ENCODE measurements at regions of chr16 and their contacts with region 1.

Region 1: DNA sequence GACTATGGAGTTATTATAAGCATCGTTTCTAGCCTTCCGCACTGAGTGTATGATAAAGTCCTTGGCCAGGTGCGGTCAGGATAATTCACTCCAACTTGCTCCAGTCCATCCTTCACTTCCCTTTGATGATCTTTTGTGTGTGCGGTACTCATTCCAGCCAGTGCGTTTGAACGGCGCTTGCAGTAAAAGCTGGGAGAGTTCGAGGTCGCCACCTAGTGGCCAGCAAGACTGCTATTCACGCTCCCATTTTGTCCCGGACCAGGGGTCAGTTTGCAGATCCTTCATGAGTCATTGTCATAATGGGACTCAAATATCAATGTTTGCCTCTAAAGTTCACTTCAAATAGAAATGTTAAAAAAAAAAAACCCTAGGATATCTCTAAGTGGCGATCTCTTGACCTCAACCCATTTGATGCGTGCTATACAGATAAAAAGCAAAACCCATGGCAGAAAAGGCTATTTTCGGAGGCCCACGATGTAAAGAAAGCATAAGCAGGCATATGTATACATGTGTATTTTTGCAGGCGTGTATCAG is 417.1 kb downstream of the TMEM114 start:
- DNase-seq: peak; percentile 57
- H3K4me3 Mint-ChIP-seq: no peak overlapping the region
- H3K27ac Mint-ChIP-seq: no peak overlapping the region
- H3K4me1 Mint-ChIP-seq: no peaks in the 10 kb centered on the region
- H3K27me3 Mint-ChIP-seq: no peaks in the 10 kb centered on the region

Region 2: DNA sequence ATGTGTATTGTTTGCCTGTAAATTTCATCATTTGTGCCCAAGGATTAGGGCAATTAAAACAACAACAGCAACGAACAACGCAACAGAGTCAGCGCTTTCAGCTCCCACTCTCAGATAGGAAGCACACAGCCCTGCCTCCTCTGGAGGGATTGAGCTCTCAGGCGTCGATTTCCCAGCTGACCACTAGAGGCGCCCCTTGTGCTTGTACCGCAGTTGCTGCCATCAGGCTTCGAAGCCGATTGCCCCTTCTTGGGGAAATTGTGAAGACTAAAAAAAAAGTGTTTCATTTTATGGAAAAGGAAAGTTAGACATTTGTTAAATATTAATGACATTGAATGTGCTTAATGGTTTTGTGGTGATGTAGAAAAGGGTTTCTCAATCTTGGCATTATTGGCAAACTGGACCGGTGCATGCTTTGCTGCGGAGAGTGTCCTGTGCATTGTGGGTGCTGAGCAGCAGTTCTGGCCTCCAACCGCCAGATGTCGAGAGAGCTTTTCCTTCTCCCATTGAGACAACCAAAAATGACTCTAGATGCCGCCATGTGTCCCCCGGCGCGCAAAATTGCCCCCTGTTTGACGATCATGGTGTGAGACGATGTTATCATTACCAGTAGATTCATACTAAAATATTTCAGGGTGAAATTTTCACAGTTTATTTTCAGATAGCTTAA is 1490.9 kb before region 1 on chr16:
- CTCF ChIA-PET with region 1: no interaction called
- intact Hi-C with region 1: loop called (anchors 5 kb)
- DNase-seq: peak; percentile 40
- H3K4me3 Mint-ChIP-seq: no peak overlapping the region
- H3K27ac Mint-ChIP-seq: no peak overlapping the region
- H3K4me1 Mint-ChIP-seq: no peaks in the 10 kb centered on the region
- H3K27me3 Mint-ChIP-seq: peaks cover 3% of the 10 kb centered on the region

Region 3: DNA sequence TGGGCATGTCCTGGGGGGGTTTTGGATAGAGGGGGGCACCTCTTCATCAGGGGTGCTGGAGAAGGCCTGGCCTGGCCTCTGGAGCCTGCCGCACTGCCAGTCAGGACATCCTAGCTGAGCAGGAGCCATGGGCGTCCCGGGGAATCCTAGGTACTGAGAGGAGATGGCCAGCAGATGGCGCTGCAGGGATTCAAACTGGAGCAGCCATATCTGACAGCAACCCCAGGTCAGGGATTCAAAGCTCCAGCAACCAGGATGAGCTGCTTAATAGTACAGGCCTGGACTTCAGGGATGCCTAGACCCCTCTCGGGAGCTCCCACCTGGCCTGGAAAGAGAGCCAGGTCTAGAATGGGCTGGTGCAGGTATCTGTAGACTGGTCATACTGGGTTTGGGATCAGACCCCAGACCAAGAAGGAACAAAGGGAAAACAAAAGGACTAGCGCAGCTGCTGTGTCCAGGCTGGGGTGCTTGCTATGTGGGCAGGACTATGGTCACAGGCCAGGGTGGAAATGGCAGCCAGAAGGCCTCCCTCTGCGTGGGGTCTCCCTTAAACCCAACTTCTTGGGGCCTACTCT is 1147.5 kb before region 1 on chr16:
- CTCF ChIA-PET with region 1: no interaction called
- intact Hi-C with region 1: loop called (anchors 10 kb)
- DNase-seq: peak; percentile 61
- H3K4me3 Mint-ChIP-seq: no peak overlapping the region
- H3K27ac Mint-ChIP-seq: no peak overlapping the region
- H3K4me1 Mint-ChIP-seq: no peaks in the 10 kb centered on the region
- H3K27me3 Mint-ChIP-seq: no peaks in the 10 kb centered on the region

Region 4: GRCh38 chr16:8187782-8188372 is 14.7 kb after region 1 on chr16:
- CTCF ChIA-PET with region 1: no interaction called
- intact Hi-C with region 1: no loop called
- DNase-seq: no peak
- H3K4me3 Mint-ChIP-seq: no peak overlapping the region
- H3K27ac Mint-ChIP-seq: no peak overlapping the region
- H3K4me1 Mint-ChIP-seq: no peaks in the 10 kb centered on the region
- H3K27me3 Mint-ChIP-seq: peaks cover 2% of the 10 kb centered on the region